HepG2 (cell line): ENCODE measurements at regions of chr10 and their contacts with region 1.

Region 1: GRCh38 chr10:53886325-53887300 is 914.4 kb downstream of the PCDH15 start:
- DNase-seq: peak; percentile 68
- ATAC-seq: peak; percentile 98
- H3K4me3 ChIP-seq: no peak overlapping the region
- H3K27ac ChIP-seq: peak overlapping the region; percentile 2
- H3K4me1 ChIP-seq: peaks cover 16% of the 10 kb centered on the region
- H3K27me3 ChIP-seq: no peaks in the 10 kb centered on the region
- CTCF ChIP-seq: no peak
- EP300 ChIP-seq: 0 out of 4 replicates have a peak, but pooled peaks of 1 of the 2 experiments have one; percentile 13
- POLR2A ChIP-seq: no peak
- RAD21 ChIP-seq: no peak

Region 2: GRCh38 chr10:53864846-53865245 is 21.8 kb before region 1 on chr10:
- CTCF ChIA-PET with region 1: no interaction called
- POLR2A ChIA-PET with region 1: no interaction called
- in situ Hi-C with region 1: no loop called
- intact Hi-C with region 1: no loop called
- DNase-seq: no peak
- ATAC-seq: no peak
- H3K4me3 ChIP-seq: no peak overlapping the region
- H3K27ac ChIP-seq: no peak overlapping the region
- H3K4me1 ChIP-seq: no peaks in the 10 kb centered on the region
- H3K27me3 ChIP-seq: no peaks in the 10 kb centered on the region
- CTCF ChIP-seq: no peak
- EP300 ChIP-seq: no peak
- POLR2A ChIP-seq: no peak
- RAD21 ChIP-seq: no peak

Region 3: GRCh38 chr10:53939654-53940053 is 53.0 kb after region 1 on chr10:
- CTCF ChIA-PET with region 1: no interaction called
- POLR2A ChIA-PET with region 1: no interaction called
- in situ Hi-C with region 1: no loop called
- intact Hi-C with region 1: loop called (anchors 5 kb)
- DNase-seq: peak; percentile 37
- ATAC-seq: peak; percentile 57; the same call in 2 of the 3 replicates
- H3K4me3 ChIP-seq: no peak overlapping the region
- H3K27ac ChIP-seq: no peak overlapping the region
- H3K4me1 ChIP-seq: peaks cover 31% of the 10 kb centered on the region
- H3K27me3 ChIP-seq: no peaks in the 10 kb centered on the region
- CTCF ChIP-seq: no peak
- EP300 ChIP-seq: peak in 1 of 2 experiments; percentile 57; a peak in 2 of 4 replicates
- POLR2A ChIP-seq: no peak
- RAD21 ChIP-seq: no peak

Region 4: GRCh38 chr10:54009672-54010071 is 123.1 kb after region 1 on chr10:
- CTCF ChIA-PET with region 1: no interaction called
- POLR2A ChIA-PET with region 1: no interaction called
- in situ Hi-C with region 1: no loop called
- intact Hi-C with region 1: loop called (anchors 5 kb)
- DNase-seq: no peak
- ATAC-seq: peak; percentile 29; the same call in 2 of the 3 replicates
- H3K4me3 ChIP-seq: no peak overlapping the region
- H3K27ac ChIP-seq: no peak overlapping the region
- H3K4me1 ChIP-seq: peaks cover 10% of the 10 kb centered on the region
- H3K27me3 ChIP-seq: no peaks in the 10 kb centered on the region
- CTCF ChIP-seq: no peak
- EP300 ChIP-seq: no peak
- POLR2A ChIP-seq: no peak
- RAD21 ChIP-seq: no peak

Region 5: DNA sequence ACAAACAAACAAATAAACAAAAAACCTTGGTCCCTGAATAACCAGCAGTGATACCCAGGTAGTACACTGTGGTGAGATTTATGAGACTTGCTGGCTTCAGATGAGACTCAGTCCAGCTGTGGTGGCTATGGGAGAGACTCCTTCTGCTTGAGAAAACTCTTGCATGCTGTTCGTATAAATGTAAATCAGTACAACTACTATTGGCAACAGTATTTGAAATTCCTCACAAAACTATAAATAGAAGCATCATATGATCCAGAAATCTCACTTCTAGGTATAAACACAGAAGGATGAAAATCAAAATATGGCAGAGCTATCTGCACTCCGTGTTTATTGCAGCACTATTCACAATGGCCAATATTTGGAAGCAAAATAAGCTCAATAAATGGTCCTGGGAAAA is 222.3 kb after region 1 on chr10:
- CTCF ChIA-PET with region 1: no interaction called
- POLR2A ChIA-PET with region 1: no interaction called
- in situ Hi-C with region 1: no loop called
- intact Hi-C with region 1: no loop called
- DNase-seq: no peak
- ATAC-seq: no peak
- H3K4me3 ChIP-seq: no peak overlapping the region
- H3K27ac ChIP-seq: no peak overlapping the region
- H3K4me1 ChIP-seq: no peaks in the 10 kb centered on the region
- H3K27me3 ChIP-seq: no peaks in the 10 kb centered on the region
- CTCF ChIP-seq: no peak
- EP300 ChIP-seq: no peak
- POLR2A ChIP-seq: no peak
- RAD21 ChIP-seq: no peak